BJ (cell line): ENCODE measurements at regions of chr2 and their contacts with region 1.

Region 1: GRCh38 chr2:71545572-71546274 is 92.4 kb downstream of the DYSF start:
- DNase-seq: no peak
- H3K4me3 ChIP-seq: no peak overlapping the region
- H3K27me3 ChIP-seq: peaks cover 10% of the 10 kb centered on the region
- CTCF ChIP-seq: peak; percentile 79

Region 2: GRCh38 chr2:71558300-71559051 is 12.8 kb after region 1 on chr2:
- CTCF ChIA-PET with region 1: interaction called, 24 read pairs
- POLR2A ChIA-PET with region 1: no interaction called
- DNase-seq: no peak
- H3K4me3 ChIP-seq: no peak overlapping the region
- H3K27me3 ChIP-seq: no peaks in the 10 kb centered on the region; the same call in 1 of the 2 replicates
- CTCF ChIP-seq: no peak

Region 3: DNA sequence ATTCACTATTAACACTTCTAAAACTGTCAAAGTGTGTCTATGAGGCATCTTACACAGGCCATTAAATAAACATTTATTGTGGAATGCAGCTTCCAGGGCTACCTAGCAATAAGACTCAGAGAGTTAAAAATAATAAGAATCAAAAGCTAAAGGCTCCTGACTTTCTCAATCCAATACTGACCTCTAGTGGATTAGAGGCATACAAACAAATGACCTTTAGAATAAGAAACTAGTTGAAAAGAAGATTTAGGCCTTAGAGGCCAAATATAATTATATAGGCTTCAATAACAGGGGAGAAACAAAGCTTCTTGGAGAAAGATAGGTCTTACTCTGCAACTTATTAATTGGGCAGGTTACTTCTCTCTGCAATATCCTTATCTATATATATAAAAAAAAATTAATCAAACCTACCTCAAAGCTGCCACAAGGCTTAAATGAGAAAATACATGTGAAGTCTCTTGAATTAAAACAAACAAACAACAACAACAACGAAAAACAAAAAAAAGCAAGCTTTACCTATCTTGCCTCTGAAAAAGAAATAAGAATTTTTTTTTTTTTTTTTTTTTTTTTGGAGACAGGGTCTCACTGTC is 1034.0 kb after region 1 on chr2:
- CTCF ChIA-PET with region 1: interaction called, 17 read pairs
- POLR2A ChIA-PET with region 1: no interaction called
- DNase-seq: no peak
- H3K4me3 ChIP-seq: no peak overlapping the region
- H3K27me3 ChIP-seq: no peaks in the 10 kb centered on the region
- CTCF ChIP-seq: peak; percentile 62

Region 4: DNA sequence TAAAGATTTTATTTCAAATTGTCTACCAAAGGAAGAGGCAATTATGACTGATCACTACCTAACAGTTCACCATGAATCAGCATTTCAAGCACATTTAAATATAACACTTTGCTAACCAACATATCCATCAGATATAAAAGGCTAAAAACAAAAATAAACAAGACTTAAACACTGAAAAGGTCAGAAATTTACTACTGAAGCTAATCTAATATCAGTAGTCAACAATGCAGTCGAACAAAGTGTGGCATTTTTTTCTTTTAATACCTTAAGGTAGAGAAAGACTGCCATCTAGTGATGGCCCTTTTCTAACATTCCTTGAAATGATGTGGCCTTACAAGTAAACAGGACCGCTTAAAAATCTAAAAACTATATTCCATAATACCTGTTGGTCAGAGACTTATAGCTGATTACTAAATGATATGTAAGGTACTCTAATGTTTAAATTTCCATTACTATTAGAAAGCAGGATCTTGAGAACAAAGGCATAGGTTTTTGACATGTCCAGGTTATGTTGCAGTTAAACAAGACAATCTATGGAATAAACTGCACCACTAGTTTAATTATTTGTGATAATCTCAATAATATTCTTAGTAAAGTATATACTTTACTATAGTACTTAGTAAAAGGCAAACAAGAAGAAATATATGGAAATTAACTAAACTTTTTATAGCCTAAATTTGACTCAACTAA is 1200.1 kb after region 1 on chr2:
- CTCF ChIA-PET with region 1: interaction called, 10 read pairs
- POLR2A ChIA-PET with region 1: no interaction called
- DNase-seq: peak; percentile 25
- H3K4me3 ChIP-seq: no peak overlapping the region
- H3K27me3 ChIP-seq: no peaks in the 10 kb centered on the region
- CTCF ChIP-seq: peak; percentile 69